Lower lobe of right lung (tissue), 2 donors: ENCODE measurements at regions of chr18 and their contacts with region 1.

Region 1: GRCh38 chr18:75478996-75479880 is 51.7 kb upstream of the SMIM21 start:
- DNase-seq: no peak
- ATAC-seq: peak; percentile 75 to 80
- H3K4me3 ChIP-seq: no peak overlapping the region
- H3K27ac ChIP-seq: no peak overlapping the region
- H3K4me1 ChIP-seq: no peaks in the 10 kb centered on the region
- H3K27me3 ChIP-seq: no peaks in the 10 kb centered on the region
- CTCF ChIP-seq: peak; percentile 70

Region 2: GRCh38 chr18:74896390-74896991 is 582.7 kb before region 1 on chr18:
- intact Hi-C with region 1: loop called (anchors 10 kb)
- DNase-seq: no peak
- ATAC-seq: peak; percentile 71 to 95
- H3K4me3 ChIP-seq: no peak overlapping the region
- H3K27ac ChIP-seq: no peak overlapping the region
- H3K4me1 ChIP-seq: peaks cover 4% of the 10 kb centered on the region
- H3K27me3 ChIP-seq: no peaks in the 10 kb centered on the region
- CTCF ChIP-seq: peak; percentile 64

Region 3: DNA sequence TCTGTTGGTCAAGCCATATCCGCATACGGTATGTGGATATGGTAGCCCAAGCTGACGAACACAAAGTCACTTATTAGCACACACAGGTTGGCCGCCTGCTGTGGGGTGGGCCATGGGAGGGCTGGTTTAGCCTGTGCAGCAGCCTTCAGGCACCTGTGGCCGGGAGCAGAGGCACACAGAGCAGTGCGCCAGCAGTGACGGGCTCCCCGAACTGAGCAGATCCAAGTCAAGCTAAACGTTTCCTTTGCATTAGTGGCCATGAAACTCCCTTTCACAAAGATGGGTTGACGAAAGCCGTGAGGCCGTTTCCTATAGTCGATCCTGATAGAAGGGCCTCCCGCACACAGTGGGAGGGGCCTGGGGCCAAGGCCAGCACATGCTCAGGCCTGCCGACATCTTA is 196.5 kb before region 1 on chr18:
- intact Hi-C with region 1: no loop called
- DNase-seq: no peak
- ATAC-seq: no peak
- H3K4me3 ChIP-seq: no peak overlapping the region
- H3K27ac ChIP-seq: no peak overlapping the region
- H3K4me1 ChIP-seq: no peaks in the 10 kb centered on the region
- H3K27me3 ChIP-seq: no peaks in the 10 kb centered on the region
- CTCF ChIP-seq: no peak